Activated CD4-positive, alpha-beta T cell treated with anti-CD3 and anti-CD28 coated beads, Interleukin-2, amount 10 ng/mL, durations not matched to agents 7 days and 5 days (primary cell): ENCODE measurements at regions of chr6 and their contacts with region 1.

Region 1: DNA sequence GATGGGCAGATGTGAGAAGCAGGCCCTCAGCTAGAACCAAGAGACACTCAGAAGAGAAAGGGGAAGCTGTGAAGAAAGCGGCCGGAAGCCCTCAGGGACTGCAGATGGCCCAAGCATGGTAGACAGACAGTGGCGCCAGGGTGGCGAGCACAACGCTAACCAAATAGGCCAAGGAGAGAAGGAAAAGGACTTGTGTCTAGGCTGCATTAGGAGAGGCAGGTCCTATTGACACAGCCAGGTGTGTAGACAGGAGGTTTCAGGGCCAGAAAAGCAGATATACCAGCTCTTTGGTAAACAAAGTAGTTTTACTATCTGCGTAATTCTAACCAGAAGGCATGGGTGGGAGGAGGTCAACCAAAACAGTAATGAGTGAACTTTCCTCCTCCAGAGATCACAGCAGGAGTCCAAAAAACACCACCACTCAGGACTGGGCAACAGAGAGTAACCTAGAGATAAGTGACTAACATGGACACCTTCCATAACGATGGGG is 15.8 kb upstream of the MAP7 start:
- DNase-seq: no peak
- H3K4me3 Mint-ChIP-seq: no peak overlapping the region
- H3K27ac Mint-ChIP-seq: peak overlapping the region; percentile 22
- H3K4me1 Mint-ChIP-seq: peaks cover 12% of the 10 kb centered on the region
- H3K27me3 Mint-ChIP-seq: no peaks in the 10 kb centered on the region

Region 2: DNA sequence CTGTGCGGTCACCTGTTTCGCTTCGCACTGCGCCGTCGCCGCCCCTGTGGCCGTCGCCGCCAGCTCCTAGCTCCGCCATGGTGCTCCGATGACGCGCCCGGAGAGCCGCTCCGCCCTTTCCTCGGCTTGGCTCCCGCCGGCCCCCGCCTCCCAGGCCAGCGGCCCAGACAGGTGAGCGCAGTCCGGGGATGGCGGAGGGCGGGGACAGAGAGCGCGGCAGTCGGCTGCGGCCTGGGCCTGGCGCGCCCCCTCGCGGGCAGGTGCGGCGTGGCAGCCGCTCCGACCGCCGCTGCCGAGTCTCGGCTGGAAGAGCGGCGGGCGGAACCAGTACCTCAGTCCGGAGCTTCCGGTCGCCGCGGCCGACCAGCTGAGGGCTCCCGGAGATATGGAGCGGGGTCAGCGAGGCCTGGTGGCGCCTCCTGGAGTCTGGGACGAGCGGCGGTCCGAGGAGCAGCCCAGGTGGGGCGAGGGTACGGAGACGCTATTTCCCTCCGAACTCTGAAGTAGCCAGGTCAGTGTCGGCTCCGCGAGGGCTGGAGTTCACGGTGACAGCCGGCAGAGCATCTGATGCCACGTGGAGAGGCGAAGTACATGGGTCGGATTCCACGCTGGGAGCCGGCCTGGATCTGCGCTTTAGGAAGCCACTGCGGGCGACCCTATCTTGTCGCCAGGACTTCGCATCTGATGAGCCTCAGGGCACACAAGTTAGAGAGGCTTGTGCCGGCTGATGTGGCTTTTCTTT is 15.6 kb before region 1 on chr6 and contains the start of gene MAP7:
- CTCF ChIA-PET with region 1: interaction called, 29 read pairs
- POLR2A ChIA-PET with region 1: no interaction called
- DNase-seq: peak; percentile 58
- H3K4me3 Mint-ChIP-seq: peak within 1 kb of the TSS; percentile 56
- H3K27ac Mint-ChIP-seq: no peak within 1 kb of the TSS
- H3K4me1 Mint-ChIP-seq: peaks cover 11% of the 10 kb centered on the region
- H3K27me3 Mint-ChIP-seq: peaks cover 57% of the 10 kb centered on the region
- total RNA-seq, gene MAP7: 2.1 to 2.3 TPM

Region 3: GRCh38 chr6:136607932-136608772 is 42.1 kb after region 1 on chr6:
- CTCF ChIA-PET with region 1: no interaction called
- POLR2A ChIA-PET with region 1: no interaction called
- DNase-seq: peak; percentile 84
- H3K4me3 Mint-ChIP-seq: no peak overlapping the region
- H3K27ac Mint-ChIP-seq: no peak overlapping the region
- H3K4me1 Mint-ChIP-seq: peaks cover 25% of the 10 kb centered on the region
- H3K27me3 Mint-ChIP-seq: no peaks in the 10 kb centered on the region